Endothelial cell of umbilical vein (primary cell): ENCODE measurements at regions of chr3 and their contacts with region 1.

Region 1: DNA sequence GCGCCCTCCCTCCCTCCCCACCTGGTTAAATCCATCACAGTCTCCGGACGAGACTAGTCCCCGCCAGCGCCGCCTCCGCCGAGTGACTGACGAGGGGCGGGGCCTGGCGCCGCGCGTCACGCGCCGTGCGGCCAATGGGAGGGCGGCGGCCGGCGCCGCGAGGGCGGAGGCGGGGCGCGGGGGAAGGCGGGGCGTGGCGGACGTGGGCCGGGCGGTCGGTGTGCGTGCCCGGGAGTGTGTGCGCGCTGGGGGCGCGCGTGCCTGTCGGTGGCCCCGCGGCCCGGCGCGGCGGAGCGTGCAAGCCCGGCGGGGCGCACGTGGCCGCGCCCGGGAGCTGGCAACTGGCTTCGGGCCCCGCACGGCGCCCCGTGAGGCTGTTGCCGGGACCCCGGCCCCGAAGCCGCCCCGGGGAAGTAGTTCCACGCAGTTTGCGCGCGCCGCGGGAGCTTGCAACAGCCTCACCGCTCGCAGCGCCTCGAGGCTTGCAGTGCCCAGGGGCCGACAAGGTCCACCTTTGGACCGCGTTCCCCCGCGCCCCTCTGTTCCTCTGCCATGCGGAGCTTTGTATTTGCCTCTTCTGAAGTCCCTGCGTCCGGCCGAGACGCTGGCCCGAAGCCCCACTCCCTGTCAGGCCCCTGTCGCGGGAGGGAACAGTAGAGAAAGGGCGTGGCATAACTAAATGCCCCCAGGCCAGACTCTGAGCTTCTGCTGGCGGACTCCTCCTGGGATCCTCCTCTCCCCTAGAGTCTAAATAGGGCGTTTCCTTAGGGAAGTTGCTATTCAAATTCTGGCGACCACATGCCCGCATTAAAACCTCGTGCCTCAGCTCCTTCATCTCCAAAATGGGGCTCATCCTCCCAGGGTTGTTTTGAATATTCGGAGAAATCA is 400.9 kb downstream of the SHQ1 start:
- DNase-seq: peak; percentile 84
- H3K4me3 ChIP-seq: peak overlapping the region in 2 of 3 experiments; percentile 23 to 95
- H3K27ac ChIP-seq: no peak overlapping the region
- H3K4me1 ChIP-seq: peaks cover 10% of the 10 kb centered on the region
- H3K27me3 ChIP-seq: peaks cover 11 to 14% of the 10 kb centered on the region in 2 experiments
- CTCF ChIP-seq: no peak
- POLR2A ChIP-seq: no peak

Region 2: GRCh38 chr3:71875461-71875947 is 571.8 kb before region 1 on chr3:
- CTCF ChIA-PET with region 1: no interaction called
- POLR2A ChIA-PET with region 1: no interaction called
- dilution Hi-C with region 1: no loop called
- intact Hi-C with region 1: loop called (anchors 10 kb)
- DNase-seq: peak; percentile 74
- H3K4me3 ChIP-seq: no peak overlapping the region
- H3K27ac ChIP-seq: no peak overlapping the region
- H3K4me1 ChIP-seq: no peaks in the 10 kb centered on the region
- H3K27me3 ChIP-seq: no peaks in the 10 kb centered on the region
- CTCF ChIP-seq: peak; percentile 76 to 90
- POLR2A ChIP-seq: no peak

Region 3: DNA sequence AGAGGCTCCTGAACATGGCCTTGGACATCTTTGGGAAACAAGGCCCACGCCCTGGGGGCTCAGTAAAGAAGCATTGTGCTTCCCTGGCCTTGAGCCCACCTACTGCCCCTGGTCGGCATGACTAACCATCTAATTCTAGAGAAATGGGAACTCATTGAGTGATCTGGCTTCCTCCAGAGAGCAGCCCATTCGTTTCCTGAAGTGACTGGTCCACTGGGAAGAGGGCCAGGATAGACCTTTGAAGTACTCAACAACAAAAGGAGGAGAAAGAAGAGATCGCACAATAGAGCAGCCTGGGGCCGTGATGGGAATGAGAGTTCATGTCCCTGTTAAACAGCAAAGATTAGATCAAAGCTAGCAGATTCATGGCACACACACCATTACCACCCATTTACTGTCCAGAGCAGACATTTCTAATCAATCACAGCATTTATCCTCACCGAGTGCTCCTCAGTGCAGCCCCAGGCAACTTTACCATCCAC is 147.9 kb before region 1 on chr3:
- CTCF ChIA-PET with region 1: interaction called, 4 read pairs
- POLR2A ChIA-PET with region 1: no interaction called
- dilution Hi-C with region 1: no loop called
- intact Hi-C with region 1: loop called (anchors 5 kb)
- DNase-seq: peak; percentile 96
- H3K4me3 ChIP-seq: no peak overlapping the region
- H3K27ac ChIP-seq: no peak overlapping the region
- H3K4me1 ChIP-seq: peaks cover 23% of the 10 kb centered on the region
- H3K27me3 ChIP-seq: peaks cover 75 to 76% of the 10 kb centered on the region in 2 experiments
- CTCF ChIP-seq: no peak
- POLR2A ChIP-seq: no peak

Region 4: GRCh38 chr3:72347819-72348319 is 99.4 kb before region 1 on chr3:
- CTCF ChIA-PET with region 1: no interaction called
- POLR2A ChIA-PET with region 1: no interaction called
- dilution Hi-C with region 1: no loop called
- intact Hi-C with region 1: loop called (anchors 2 kb)
- DNase-seq: peak; percentile 92
- H3K4me3 ChIP-seq: no peak overlapping the region
- H3K27ac ChIP-seq: no peak overlapping the region
- H3K4me1 ChIP-seq: peaks cover 7% of the 10 kb centered on the region
- H3K27me3 ChIP-seq: peaks cover 25 to 26% of the 10 kb centered on the region in 2 experiments
- CTCF ChIP-seq: peak in 1 of 2 donors; percentile 26
- POLR2A ChIP-seq: peak; percentile 40

Region 5: GRCh38 chr3:72461787-72462186 is 14.5 kb after region 1 on chr3:
- CTCF ChIA-PET with region 1: no interaction called
- POLR2A ChIA-PET with region 1: no interaction called
- dilution Hi-C with region 1: no loop called
- intact Hi-C with region 1: no loop called
- DNase-seq: no peak
- H3K4me3 ChIP-seq: no peak overlapping the region
- H3K27ac ChIP-seq: no peak overlapping the region
- H3K4me1 ChIP-seq: no peaks in the 10 kb centered on the region
- H3K27me3 ChIP-seq: peaks cover 7 to 18% of the 10 kb centered on the region in 2 experiments
- CTCF ChIP-seq: no peak
- POLR2A ChIP-seq: no peak

Region 6: GRCh38 chr3:72473156-72473555 is 25.9 kb after region 1 on chr3:
- CTCF ChIA-PET with region 1: no interaction called
- POLR2A ChIA-PET with region 1: no interaction called
- dilution Hi-C with region 1: no loop called
- intact Hi-C with region 1: no loop called
- DNase-seq: no peak
- H3K4me3 ChIP-seq: no peak overlapping the region
- H3K27ac ChIP-seq: no peak overlapping the region
- H3K4me1 ChIP-seq: no peaks in the 10 kb centered on the region
- H3K27me3 ChIP-seq: peaks cover 8 to 18% of the 10 kb centered on the region in 2 experiments
- CTCF ChIP-seq: no peak
- POLR2A ChIP-seq: no peak